ENCODE measurements at regions of chr2 and their contacts with region 1.

Region 1: GRCh38 chr2:46632349-46632748 is 153.0 kb downstream of the TMEM247 start:
- DNase-seq: no peak
- H3K4me3 ChIP-seq: no peak overlapping the region
- H3K27ac ChIP-seq: no peak overlapping the region
- H3K4me1 ChIP-seq: no peaks in the 10 kb centered on the region
- H3K27me3 ChIP-seq: no peaks in the 10 kb centered on the region
- CTCF ChIP-seq: peak in 3 of 4 experiments; percentile 66 to 82 (median 75)
- POLR2A ChIP-seq: no peak

Region 2: GRCh38 chr2:46887028-46887885 is 254.9 kb after region 1 on chr2:
- intact Hi-C with region 1: loop called (anchors 5 kb)
- DNase-seq: no peak
- H3K4me3 ChIP-seq: no peak overlapping the region
- H3K27ac ChIP-seq: no peak overlapping the region
- H3K4me1 ChIP-seq: no peaks in the 10 kb centered on the region
- H3K27me3 ChIP-seq: no peaks in the 10 kb centered on the region
- CTCF ChIP-seq: no peak
- POLR2A ChIP-seq: no peak